ENCODE measurements at regions of chr1 and their contacts with region 1.

Region 1: DNA sequence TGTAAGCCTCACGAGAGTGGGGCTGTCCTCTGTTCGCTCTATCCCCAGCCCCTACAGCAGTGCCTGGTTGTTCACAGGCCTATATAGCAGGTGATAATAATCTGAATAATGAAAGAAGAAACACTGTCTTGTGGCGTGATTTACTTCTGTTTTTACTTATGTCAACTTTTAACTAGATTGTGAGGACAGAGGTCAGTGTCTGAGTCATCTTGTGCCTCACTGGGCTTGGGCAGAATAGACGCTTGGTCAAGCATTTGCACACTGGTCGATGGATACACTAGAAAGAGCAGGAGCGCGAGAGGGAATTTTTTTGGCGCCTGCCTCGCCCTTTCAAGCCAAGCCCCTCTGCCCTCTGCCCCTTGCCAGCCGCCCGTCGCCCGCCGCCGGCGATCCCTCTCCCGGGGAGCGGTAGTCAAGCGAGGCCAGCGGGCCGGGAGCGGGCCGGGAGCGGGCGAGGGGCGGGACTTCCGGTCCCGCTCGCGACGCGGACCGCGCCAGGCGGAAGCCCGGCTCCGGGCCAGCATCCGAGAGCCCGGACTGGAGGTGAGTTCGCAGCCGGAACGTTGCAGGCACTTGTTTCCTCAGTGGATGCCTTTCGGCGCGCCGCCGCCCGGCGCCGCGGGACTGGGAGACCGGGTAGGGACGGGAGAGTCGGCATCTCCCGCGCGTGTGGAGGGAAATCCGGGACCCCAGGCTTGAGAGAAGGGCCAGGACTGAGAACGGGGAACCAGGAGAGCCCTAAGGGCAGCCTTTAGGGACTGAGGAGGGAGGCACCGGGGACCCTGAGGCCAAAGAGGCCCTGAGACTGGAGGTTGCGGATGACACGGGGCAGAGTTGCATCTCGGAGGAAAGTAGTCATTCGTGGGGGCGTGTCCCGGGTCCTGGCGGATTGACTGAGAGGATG is at the start of gene DISP1:
- DNase-seq: peak; percentile 68
- H3K4me3 Mint-ChIP-seq: peak within 1 kb of the TSS; percentile 90
- H3K27ac Mint-ChIP-seq: peak within 1 kb of the TSS; percentile 93
- H3K4me1 Mint-ChIP-seq: peaks cover 33% of the 10 kb centered on the region
- H3K27me3 Mint-ChIP-seq: peaks cover 12% of the 10 kb centered on the region
- total RNA-seq, gene DISP1: 1.0 and 1.2 TPM in 2 replicates

Region 2: DNA sequence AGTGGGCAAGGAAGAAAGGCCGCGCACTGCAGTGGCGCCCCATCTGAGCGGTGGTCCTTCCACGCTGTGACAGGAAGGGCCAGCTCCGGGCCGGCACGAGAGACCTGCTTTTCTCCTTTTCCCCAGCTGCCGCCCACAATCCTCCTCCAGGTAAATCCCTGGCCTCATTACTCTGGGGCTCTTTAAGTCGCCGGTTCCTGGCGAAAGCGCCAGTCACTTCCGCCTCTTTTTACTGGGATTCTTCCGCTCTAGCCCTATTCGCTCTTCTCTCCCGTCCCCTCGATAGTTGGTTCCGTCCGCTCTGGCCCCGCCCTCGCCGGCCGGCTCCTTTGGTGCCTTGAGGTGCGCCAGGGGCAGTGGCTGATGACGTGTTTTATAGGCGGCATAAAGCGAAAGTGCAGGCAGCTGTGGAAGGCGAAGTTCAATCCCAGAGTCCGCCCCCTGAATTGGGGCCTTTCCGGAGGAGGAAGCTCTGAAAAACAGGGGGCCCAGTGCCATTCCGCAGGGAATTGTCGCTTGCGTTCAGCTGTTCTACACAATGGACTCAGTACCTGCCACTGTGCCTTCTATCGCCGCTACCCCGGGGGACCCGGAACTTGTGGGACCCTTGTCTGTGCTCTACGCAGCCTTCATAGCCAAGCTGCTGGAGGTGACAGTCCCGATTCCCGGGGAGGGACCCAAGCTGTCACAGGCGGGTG is 170.7 kb before region 1 on chr1:
- intact Hi-C with region 1: loop called (anchors 10 kb)
- DNase-seq: peak; percentile 98
- H3K4me3 Mint-ChIP-seq: peak overlapping the region; percentile 99
- H3K27ac Mint-ChIP-seq: peak overlapping the region; percentile 97
- H3K4me1 Mint-ChIP-seq: peaks cover 33% of the 10 kb centered on the region
- H3K27me3 Mint-ChIP-seq: no peaks in the 10 kb centered on the region

Region 3: GRCh38 chr1:222732216-222733159 is 82.3 kb before region 1 on chr1:
- intact Hi-C with region 1: no loop called
- DNase-seq: no peak
- H3K4me3 Mint-ChIP-seq: no peak overlapping the region
- H3K27ac Mint-ChIP-seq: peak overlapping the region; percentile 35
- H3K4me1 Mint-ChIP-seq: peaks cover 13% of the 10 kb centered on the region
- H3K27me3 Mint-ChIP-seq: no peaks in the 10 kb centered on the region

Region 4: GRCh38 chr1:222754366-222755139 is 60.2 kb before region 1 on chr1:
- intact Hi-C with region 1: no loop called
- DNase-seq: no peak
- H3K4me3 Mint-ChIP-seq: no peak overlapping the region
- H3K27ac Mint-ChIP-seq: no peak overlapping the region
- H3K4me1 Mint-ChIP-seq: no peaks in the 10 kb centered on the region
- H3K27me3 Mint-ChIP-seq: peaks cover 6% of the 10 kb centered on the region

Region 5: GRCh38 chr1:222792744-222793143 is 22.0 kb before region 1 on chr1:
- intact Hi-C with region 1: no loop called
- DNase-seq: no peak
- H3K4me3 Mint-ChIP-seq: no peak overlapping the region
- H3K27ac Mint-ChIP-seq: no peak overlapping the region
- H3K4me1 Mint-ChIP-seq: peaks cover 12% of the 10 kb centered on the region
- H3K27me3 Mint-ChIP-seq: peaks cover 9% of the 10 kb centered on the region

Region 6: DNA sequence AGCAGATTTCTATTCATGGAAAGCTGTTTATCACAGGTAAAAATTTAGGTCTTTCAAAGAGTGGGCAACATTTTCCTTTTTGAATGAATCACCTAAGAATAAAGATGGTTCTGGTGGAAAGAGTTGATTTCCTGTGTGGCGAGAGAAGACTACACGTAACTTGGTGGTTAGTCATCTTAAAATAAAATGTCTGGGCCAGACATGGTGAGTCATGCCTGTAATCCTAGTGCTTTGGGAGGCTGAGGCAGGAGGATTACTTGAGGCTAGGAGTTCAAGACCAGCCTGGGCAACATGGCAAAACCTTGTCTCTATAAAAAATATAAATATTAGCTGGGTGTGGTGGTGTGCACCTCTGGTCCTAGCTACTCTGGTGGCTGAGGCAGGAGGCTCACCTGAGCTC is 65.8 kb after region 1 on chr1:
- intact Hi-C with region 1: loop called (anchors 1 kb)
- DNase-seq: no peak
- H3K4me3 Mint-ChIP-seq: no peak overlapping the region
- H3K27ac Mint-ChIP-seq: peak overlapping the region; percentile 40
- H3K4me1 Mint-ChIP-seq: peaks cover 10% of the 10 kb centered on the region
- H3K27me3 Mint-ChIP-seq: no peaks in the 10 kb centered on the region

Region 7: DNA sequence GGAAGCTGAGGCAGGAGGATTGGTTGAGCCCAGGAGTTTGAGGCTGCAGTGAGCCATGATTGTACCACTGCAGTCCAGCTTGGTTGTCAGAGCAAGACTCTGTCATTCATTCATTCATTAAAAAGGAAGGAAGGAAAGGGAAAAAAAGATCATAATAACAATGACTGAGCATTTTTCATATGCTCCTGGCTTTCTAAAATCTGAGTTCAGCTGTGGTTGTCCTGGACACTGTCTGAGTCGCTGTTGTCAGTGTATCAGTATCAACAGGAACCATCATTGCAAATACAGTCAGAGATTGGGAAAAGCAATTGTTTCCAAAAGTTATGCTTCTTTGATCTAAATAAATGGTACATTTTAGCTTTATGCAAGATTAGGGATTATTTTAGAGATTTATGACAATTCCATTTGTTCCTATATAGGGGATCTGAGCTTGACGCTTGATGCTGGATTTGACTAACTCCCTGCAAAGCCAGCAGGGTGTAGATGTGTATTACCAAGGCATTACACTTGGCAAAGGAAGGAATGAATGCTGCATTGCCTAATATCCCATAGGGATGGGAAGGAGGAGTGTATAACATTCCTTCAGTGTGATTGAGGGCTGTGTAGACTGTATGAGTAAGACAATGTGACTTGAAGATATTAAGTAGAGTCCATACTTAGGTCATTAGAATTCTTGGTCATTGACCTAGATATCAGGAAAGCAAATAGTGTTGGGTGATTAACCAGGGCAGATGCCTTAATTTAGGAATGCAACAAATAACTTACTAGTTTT is 100.3 kb after region 1 on chr1:
- intact Hi-C with region 1: no loop called
- DNase-seq: no peak
- H3K4me3 Mint-ChIP-seq: no peak overlapping the region
- H3K27ac Mint-ChIP-seq: no peak overlapping the region
- H3K4me1 Mint-ChIP-seq: no peaks in the 10 kb centered on the region
- H3K27me3 Mint-ChIP-seq: no peaks in the 10 kb centered on the region

Region 8: GRCh38 chr1:223142795-223143536 is 328.2 kb after region 1 on chr1 and contains the start of gene TLR5:
- intact Hi-C with region 1: loop called (anchors 1 kb)
- DNase-seq: peak; percentile 82
- H3K4me3 Mint-ChIP-seq: peak within 1 kb of the TSS; percentile 68
- H3K27ac Mint-ChIP-seq: peak within 1 kb of the TSS; percentile 18
- H3K4me1 Mint-ChIP-seq: peaks cover 7% of the 10 kb centered on the region
- H3K27me3 Mint-ChIP-seq: peaks cover 11% of the 10 kb centered on the region
- total RNA-seq, gene TLR5: not detected in 2 replicates

Region 9: DNA sequence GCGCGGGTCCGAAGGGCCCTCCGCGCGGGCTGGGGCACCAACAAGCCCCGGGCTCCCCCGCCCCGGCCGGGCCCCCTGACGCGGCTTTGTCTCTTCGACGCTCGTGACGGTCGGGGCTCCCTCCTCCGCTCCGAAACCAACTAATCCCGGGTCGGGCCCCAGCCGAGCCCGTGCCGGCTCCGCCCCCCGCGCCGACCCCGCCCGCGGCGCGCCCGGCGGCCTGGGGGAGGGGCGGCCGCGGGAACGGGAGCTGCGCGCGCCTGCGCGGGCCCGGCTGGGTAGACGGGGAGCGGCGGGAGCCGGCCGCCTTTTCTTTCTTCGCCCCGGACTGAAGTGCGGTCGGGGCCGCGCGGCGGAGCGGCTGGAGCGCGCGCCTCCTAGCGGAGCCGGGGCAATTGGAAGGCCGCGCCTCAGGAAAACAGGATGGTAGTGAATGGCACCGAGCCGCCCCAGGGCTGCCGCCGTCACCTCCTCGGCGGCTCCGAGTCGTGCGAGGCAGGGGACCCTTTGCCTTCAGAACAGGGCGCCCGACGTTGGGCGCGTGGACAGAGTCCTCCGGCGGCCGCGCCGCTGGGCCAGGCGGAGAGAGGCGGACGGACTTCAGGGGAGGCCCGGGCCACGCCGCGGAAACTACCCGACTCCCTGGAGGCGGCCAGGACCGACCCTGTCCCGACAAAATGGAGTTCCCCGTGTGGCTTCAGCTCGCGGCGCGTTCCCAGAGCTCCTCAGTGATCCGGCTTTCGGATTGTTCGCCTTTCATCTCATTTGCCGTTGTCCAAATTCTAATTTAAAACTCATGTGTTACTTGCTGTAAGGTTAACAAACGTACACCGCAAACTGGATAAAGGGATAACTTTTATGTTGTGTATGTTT is 1031.3 kb after region 1 on chr1 and contains the start of gene TP53BP2:
- intact Hi-C with region 1: loop called (anchors 5 kb)
- DNase-seq: peak; percentile 81
- H3K4me3 Mint-ChIP-seq: peak within 1 kb of the TSS; percentile 95
- H3K27ac Mint-ChIP-seq: peak within 1 kb of the TSS; percentile 96
- H3K4me1 Mint-ChIP-seq: peaks cover 42% of the 10 kb centered on the region
- H3K27me3 Mint-ChIP-seq: peaks cover 5% of the 10 kb centered on the region
- total RNA-seq, gene TP53BP2: 40.4 and 47.2 TPM in 2 replicates